Stomach (tissue), 19 donors: ENCODE measurements at regions of chr6 and their contacts with region 1.

Region 1: GRCh38 chr6:159854959-159855358 is 35.8 kb upstream of the MAS1 start:
- DNase-seq: no peak
- H3K4me3 ChIP-seq: no peak overlapping the region
- H3K27ac ChIP-seq: no peak overlapping the region
- H3K4me1 ChIP-seq: peaks cover 0 to 3% (median 0%) of the 10 kb centered on the region in 4 donors
- H3K27me3 ChIP-seq: no peaks in the 10 kb centered on the region
- CTCF ChIP-seq: no peak
- EP300 ChIP-seq: no peak
- POLR2A ChIP-seq: no peak

Region 2: DNA sequence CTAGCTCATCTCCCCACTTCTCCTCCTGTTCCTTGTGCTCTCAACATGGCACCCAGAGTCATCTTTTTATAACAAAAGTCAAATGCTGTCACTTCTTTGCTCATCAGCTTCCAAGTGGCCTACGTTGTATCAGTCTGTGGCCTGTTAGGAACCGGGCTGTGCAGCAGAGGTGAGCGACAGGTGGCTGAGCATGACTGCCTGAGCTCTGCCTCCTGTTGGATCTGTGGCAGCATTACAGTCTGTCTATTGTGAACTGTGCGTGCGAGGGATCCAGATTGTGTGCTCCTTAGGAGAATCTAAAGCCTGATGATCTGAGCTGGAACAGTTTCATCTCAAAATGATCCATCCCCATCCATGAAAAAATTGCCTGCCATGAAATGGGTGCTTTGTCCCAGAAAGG is 556.1 kb before region 1 on chr6:
- intact Hi-C with region 1: no loop called
- DNase-seq: no peak
- H3K4me3 ChIP-seq: no peak overlapping the region
- H3K27ac ChIP-seq: no peak overlapping the region
- H3K4me1 ChIP-seq: no peaks in the 10 kb centered on the region
- H3K27me3 ChIP-seq: no peaks in the 10 kb centered on the region
- CTCF ChIP-seq: no peak
- EP300 ChIP-seq: no peak
- POLR2A ChIP-seq: no peak

Region 3: GRCh38 chr6:159726918-159727716 is 127.8 kb before region 1 on chr6 and contains the start of gene WTAP:
- intact Hi-C with region 1: no loop called
- DNase-seq: peak; percentile 97 to 99
- H3K4me3 ChIP-seq: peak within 1 kb of the TSS; percentile 65 to 96 (median 84)
- H3K27ac ChIP-seq: peak within 1 kb of the TSS; percentile 97 to 100 (median 99)
- H3K4me1 ChIP-seq: peaks cover 30 to 60% (median 44%) of the 10 kb centered on the region in 4 donors
- H3K27me3 ChIP-seq: no peaks in the 10 kb centered on the region
- CTCF ChIP-seq: no peak
- EP300 ChIP-seq: no peak
- POLR2A ChIP-seq: peak in 2 of 4 donors; percentile 37 to 69
- total RNA-seq, gene WTAP: 35.0 to 125 (median 82.6) TPM

Region 4: GRCh38 chr6:159941286-159942113 is 86.5 kb after region 1 on chr6:
- intact Hi-C with region 1: loop called (anchors 5 kb)
- DNase-seq: peak in 1 of 2 donors; percentile 59
- H3K4me3 ChIP-seq: no peak overlapping the region
- H3K27ac ChIP-seq: no peak overlapping the region
- H3K4me1 ChIP-seq: peaks cover 5 to 19% (median 10%) of the 10 kb centered on the region in 4 donors
- H3K27me3 ChIP-seq: no peaks in the 10 kb centered on the region
- CTCF ChIP-seq: peak in 4 of 7 experiments; percentile 11 to 66 (median 38)
- EP300 ChIP-seq: no peak
- POLR2A ChIP-seq: no peak